Cardiac septum (tissue), 1 donor: ENCODE measurements at regions of chr3 and their contacts with region 1.

Region 1: DNA sequence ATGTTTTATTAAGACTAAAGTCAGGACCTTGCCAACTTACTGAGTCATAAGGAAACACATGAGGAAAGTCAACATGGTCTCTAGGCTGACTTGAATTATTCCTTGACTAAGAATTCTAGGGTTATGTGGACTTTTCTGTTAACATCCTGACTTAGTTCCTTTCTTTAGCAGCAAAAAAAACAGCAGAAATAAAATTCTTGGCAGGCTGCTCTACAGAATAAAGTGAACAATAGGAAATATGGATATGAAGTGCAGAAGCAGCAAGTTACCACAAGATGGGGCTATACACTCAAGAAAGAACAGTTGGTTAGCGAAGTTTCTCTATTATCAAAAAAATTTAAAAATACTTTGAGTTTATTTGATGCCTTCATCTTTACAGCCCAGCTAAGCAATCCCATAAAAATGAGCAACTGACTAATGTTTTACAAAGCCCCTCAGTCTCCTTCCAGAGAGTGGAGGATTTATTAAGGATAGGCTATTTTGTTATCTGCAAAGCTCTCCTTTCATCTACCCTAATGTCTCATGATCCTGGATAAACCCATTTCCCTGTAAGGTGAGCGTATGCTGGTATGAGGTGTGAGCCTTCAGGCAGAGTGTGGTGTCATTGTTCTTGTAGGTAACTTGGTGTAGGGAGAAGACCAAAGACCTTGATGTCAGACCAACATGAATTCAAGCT is 23.1 kb upstream of the MCCC1 start:
- DNase-seq: no peak

Region 2: GRCh38 chr3:183188895-183189462 is 66.6 kb after region 1 on chr3:
- intact Hi-C with region 1: loop called (anchors 5 kb)
- DNase-seq: no peak

Region 3: DNA sequence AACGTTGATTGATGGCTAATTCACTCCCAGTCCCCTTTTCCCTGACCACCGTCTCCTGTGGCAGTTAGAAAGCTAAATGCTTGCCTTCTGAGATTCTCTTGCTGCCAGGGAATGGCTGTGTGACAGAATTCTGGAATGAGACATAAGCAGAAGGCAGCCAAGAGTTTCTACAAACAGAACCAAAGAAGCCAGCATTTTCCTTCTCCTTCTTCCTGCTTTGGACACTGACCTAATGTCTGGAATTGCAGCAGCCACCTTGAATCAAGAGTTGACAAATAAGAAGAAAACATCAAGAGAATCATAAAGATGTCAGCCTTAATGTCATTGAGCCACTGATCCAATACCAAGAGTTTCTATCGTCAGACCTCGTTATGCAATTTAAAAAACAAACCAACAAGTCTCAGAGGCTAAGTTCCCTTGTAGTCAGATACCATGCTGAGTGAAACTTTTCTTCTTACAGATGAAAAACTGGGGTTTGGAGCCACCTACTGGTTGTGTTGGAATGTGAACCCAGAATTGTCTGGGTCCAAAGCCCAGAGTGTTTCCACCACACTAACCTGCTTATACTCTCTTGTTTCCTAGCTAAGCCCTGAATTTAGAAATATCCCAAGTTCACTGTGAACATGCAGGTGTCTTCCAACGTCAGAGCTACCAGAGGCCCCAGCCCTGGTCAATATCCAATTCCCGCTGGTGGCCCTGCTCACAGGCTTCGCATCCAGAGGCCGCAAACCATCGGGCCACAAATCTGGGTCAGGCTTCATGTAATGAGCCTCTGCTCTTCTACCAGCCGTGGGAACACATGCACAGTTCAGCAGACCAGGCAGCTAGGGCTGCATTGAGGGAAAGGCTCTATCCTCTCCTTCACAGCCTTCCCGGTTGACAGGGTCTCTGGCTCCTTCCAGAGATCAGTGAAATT is 263.6 kb after region 1 on chr3:
- intact Hi-C with region 1: loop called (anchors 2 kb)
- DNase-seq: no peak